ENCODE measurements at regions of chr10 and their contacts with region 1.

Region 1: DNA sequence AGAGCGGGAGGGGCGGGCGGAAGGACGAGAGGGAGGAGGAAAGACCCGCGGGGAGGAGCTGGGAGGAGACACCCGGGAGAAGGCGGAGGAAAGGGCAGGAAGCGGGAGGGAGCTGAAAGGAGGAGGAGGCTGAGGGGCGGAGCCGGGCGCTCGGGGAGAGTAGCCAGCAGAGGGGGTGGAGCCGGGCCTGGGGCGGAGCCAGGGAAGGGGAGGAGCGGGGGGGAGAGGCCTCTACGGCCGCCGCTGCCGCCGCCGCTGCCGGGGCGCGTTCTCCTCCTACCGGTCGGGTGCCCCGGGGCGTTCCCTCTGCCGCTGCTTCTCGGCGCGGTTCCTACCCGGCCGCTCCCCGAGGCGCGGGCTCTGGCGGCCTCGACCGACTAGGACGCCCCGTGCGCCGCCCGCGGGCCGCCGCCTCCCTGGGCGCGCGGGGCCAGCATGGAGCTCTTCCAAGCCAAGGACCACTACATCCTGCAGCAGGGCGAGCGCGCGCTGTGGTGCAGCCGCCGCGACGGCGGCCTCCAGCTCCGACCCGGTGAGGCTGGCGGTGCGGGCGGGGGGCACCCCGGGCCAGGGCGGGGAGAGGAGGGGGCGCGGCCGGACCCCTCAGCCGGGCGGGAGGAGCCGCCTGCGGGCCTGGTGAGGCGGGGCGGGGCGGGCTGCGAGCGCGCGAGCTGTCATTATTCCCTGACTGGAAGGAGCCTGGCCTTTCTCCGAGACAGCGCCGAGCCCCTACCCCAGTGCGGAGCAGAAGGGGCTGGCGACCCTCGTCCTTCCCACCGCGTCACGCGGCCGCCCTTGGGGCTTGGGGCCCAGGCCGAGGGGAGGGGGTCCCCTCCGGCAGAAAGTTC is at the start of gene INPP5F:
- DNase-seq: peak; percentile 95 to 100 (median 96)
- ATAC-seq: peak; percentile 98
- H3K4me3 ChIP-seq: peak within 1 kb of the TSS; percentile 78
- H3K4me3 Mint-ChIP-seq: peak within 1 kb of the TSS; percentile 89 to 95 (median 94)
- H3K27ac ChIP-seq: peak within 1 kb of the TSS; percentile 76
- H3K27ac Mint-ChIP-seq: peak within 1 kb of the TSS; percentile 71 to 92 (median 87)
- H3K4me1 ChIP-seq: peaks cover 11 to 24% of the 10 kb centered on the region in 2 donors
- H3K4me1 Mint-ChIP-seq: peaks cover 25 to 53% (median 38%) of the 10 kb centered on the region in 7 donors
- H3K27me3 ChIP-seq: no peaks in the 10 kb centered on the region
- H3K27me3 Mint-ChIP-seq: no peaks in the 10 kb centered on the region
- total RNA-seq, gene INPP5F: 8.5 to 12.1 (median 10.0) TPM

Region 2: GRCh38 chr10:119028900-119029612 is 697.0 kb before region 1 on chr10:
- CTCF ChIA-PET with region 1: no interaction called
- POLR2A ChIA-PET with region 1: no interaction called
- intact Hi-C with region 1: loop called in 1 of 2 experiments (anchors 2 kb)
- DNase-seq: peak; percentile 50 to 81 (median 60)
- ATAC-seq: peak; percentile 85
- H3K4me3 ChIP-seq: peak overlapping the region; percentile 43
- H3K4me3 Mint-ChIP-seq: peak overlapping the region; percentile 59 to 87 (median 78)
- H3K27ac ChIP-seq: no peak overlapping the region
- H3K27ac Mint-ChIP-seq: peak overlapping the region in 3 of 9 donors; percentile 17 to 65 (median 55)
- H3K4me1 ChIP-seq: no peaks in the 10 kb centered on the region
- H3K4me1 Mint-ChIP-seq: peaks cover 6 to 24% (median 10%) of the 10 kb centered on the region in 7 donors
- H3K27me3 ChIP-seq: no peaks in the 10 kb centered on the region
- H3K27me3 Mint-ChIP-seq: peaks cover 0 to 12% (median 0%) of the 10 kb centered on the region in 5 donors

Region 3: GRCh38 chr10:119178372-119179119 is 547.5 kb before region 1 on chr10 and contains the start of gene PRDX3:
- CTCF ChIA-PET with region 1: no interaction called
- POLR2A ChIA-PET with region 1: no interaction called
- intact Hi-C with region 1: loop called (anchors 1 to 5 kb)
- DNase-seq: peak; percentile 81 to 96 (median 89)
- ATAC-seq: peak; percentile 100
- H3K4me3 ChIP-seq: peak within 1 kb of the TSS; percentile 97
- H3K4me3 Mint-ChIP-seq: peak within 1 kb of the TSS; percentile 91 to 99 (median 96)
- H3K27ac ChIP-seq: peak within 1 kb of the TSS; percentile 79
- H3K27ac Mint-ChIP-seq: peak within 1 kb of the TSS; percentile 86 to 98 (median 93)
- H3K4me1 ChIP-seq: peaks cover 7 to 13% of the 10 kb centered on the region in 2 donors
- H3K4me1 Mint-ChIP-seq: peaks cover 13 to 48% (median 36%) of the 10 kb centered on the region in 7 donors
- H3K27me3 ChIP-seq: no peaks in the 10 kb centered on the region
- H3K27me3 Mint-ChIP-seq: no peaks in the 10 kb centered on the region
- total RNA-seq, gene PRDX3: 11.7 to 120 (median 35.4) TPM

Region 4: DNA sequence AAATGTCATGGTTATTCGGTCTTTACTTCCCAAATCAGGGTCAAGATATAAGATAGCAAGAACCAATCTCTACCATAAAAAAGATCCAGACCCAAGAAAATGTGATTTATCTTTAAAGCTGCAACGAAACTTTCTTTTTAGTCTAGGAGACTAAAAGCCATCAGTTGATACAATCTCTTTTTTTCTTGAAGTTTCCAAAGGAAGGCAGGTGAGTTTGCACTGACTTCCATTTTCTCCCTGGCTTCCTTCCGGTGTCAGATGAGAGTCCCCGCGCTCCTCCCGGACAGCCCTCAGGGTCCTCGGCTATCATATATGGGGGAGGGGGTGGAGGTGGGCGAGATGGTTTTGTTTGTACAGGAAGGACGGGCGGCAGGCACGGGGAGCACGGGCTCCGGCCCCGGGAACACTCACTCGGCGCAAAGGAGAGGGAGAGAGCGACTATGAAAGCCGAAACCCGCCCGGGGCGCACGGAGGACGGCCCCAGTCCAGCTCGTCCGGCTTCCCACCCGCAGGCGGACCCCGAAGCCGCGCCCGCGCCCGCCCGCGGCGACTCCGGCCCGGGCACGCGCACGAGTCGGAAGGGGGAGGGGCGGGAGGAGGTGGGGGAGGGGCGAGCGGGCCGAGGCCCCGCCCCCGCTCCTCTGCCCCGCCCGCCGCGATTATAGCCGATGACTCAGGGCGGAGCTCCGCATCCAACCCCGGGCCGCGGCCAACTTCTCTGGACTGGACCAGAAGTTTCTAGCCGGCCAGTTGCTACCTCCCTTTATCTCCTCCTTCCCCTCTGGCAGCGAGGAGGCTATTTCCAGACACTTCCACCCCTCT is 75.1 kb before region 1 on chr10 and contains the start of gene BAG3:
- CTCF ChIA-PET with region 1: no interaction called
- POLR2A ChIA-PET with region 1: interaction called, 10 read pairs
- intact Hi-C with region 1: loop called (anchors 1 kb)
- DNase-seq: peak; percentile 50 to 84 (median 67)
- ATAC-seq: peak; percentile 88
- H3K4me3 ChIP-seq: peak within 1 kb of the TSS; percentile 83
- H3K4me3 Mint-ChIP-seq: peak within 1 kb of the TSS; percentile 93 to 100 (median 97)
- H3K27ac ChIP-seq: peak within 1 kb of the TSS; percentile 93
- H3K27ac Mint-ChIP-seq: peak within 1 kb of the TSS; percentile 91 to 99 (median 97)
- H3K4me1 ChIP-seq: peaks cover 20 to 29% of the 10 kb centered on the region in 2 donors
- H3K4me1 Mint-ChIP-seq: peaks cover 29 to 48% (median 44%) of the 10 kb centered on the region in 7 donors
- H3K27me3 ChIP-seq: no peaks in the 10 kb centered on the region
- H3K27me3 Mint-ChIP-seq: peaks cover 0 to 2% (median 0%) of the 10 kb centered on the region in 5 donors
- total RNA-seq, gene BAG3: 21.9 to 44.5 (median 23.1) TPM

Region 5: DNA sequence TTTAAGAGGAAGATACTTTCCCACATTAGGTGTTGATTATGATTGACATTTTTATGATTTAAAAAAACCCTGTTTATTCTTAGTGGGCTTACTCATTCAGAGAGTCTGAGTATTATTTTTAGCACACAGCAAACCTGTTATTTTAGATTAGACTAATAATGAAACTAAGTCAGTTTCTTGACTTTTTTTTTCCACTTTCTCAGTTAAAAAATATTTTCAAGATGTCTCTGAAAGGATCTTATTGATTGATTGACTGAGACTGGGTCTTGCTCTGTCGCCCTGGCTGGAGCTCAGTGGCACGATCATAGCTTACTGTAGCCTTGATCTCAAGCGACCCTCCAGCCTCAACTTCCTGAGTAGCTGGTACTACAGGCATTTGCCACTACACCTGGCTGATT is 20.6 kb before region 1 on chr10:
- CTCF ChIA-PET with region 1: no interaction called
- POLR2A ChIA-PET with region 1: no interaction called
- intact Hi-C with region 1: loop called in 1 of 2 experiments (anchors 1 kb)
- DNase-seq: no peak
- ATAC-seq: no peak
- H3K4me3 ChIP-seq: no peak overlapping the region
- H3K4me3 Mint-ChIP-seq: peak overlapping the region in 5 of 10 donors; percentile 15 to 46 (median 26)
- H3K27ac ChIP-seq: no peak overlapping the region
- H3K27ac Mint-ChIP-seq: peak overlapping the region in 3 of 9 donors; percentile 56 to 86 (median 60)
- H3K4me1 ChIP-seq: no peaks in the 10 kb centered on the region
- H3K4me1 Mint-ChIP-seq: peaks cover 5 to 34% (median 10%) of the 10 kb centered on the region in 7 donors
- H3K27me3 ChIP-seq: no peaks in the 10 kb centered on the region
- H3K27me3 Mint-ChIP-seq: peaks cover 0 to 5% (median 0%) of the 10 kb centered on the region in 5 donors

Region 6: GRCh38 chr10:119761106-119761505 is 35.1 kb after region 1 on chr10:
- CTCF ChIA-PET with region 1: no interaction called
- POLR2A ChIA-PET with region 1: no interaction called
- intact Hi-C with region 1: no loop called
- DNase-seq: no peak
- ATAC-seq: no peak
- H3K4me3 ChIP-seq: no peak overlapping the region
- H3K4me3 Mint-ChIP-seq: no peak overlapping the region
- H3K27ac ChIP-seq: no peak overlapping the region
- H3K27ac Mint-ChIP-seq: no peak overlapping the region
- H3K4me1 ChIP-seq: no peaks in the 10 kb centered on the region
- H3K4me1 Mint-ChIP-seq: peaks cover 0 to 5% (median 0%) of the 10 kb centered on the region in 7 donors
- H3K27me3 ChIP-seq: no peaks in the 10 kb centered on the region
- H3K27me3 Mint-ChIP-seq: no peaks in the 10 kb centered on the region

Region 7: GRCh38 chr10:119892188-119893065 is 166.4 kb after region 1 on chr10 and contains the start of gene SEC23IP:
- CTCF ChIA-PET with region 1: no interaction called
- POLR2A ChIA-PET with region 1: no interaction called
- intact Hi-C with region 1: loop called (anchors 1 kb)
- DNase-seq: peak; percentile 77 to 94 (median 83)
- ATAC-seq: peak; percentile 99
- H3K4me3 ChIP-seq: peak within 1 kb of the TSS; percentile 95
- H3K4me3 Mint-ChIP-seq: peak within 1 kb of the TSS; percentile 92 to 100 (median 98)
- H3K27ac ChIP-seq: peak within 1 kb of the TSS; percentile 89
- H3K27ac Mint-ChIP-seq: peak within 1 kb of the TSS; percentile 95 to 99 (median 98)
- H3K4me1 ChIP-seq: peaks cover 12 to 21% of the 10 kb centered on the region in 2 donors
- H3K4me1 Mint-ChIP-seq: peaks cover 40 to 53% (median 48%) of the 10 kb centered on the region in 7 donors
- H3K27me3 ChIP-seq: no peaks in the 10 kb centered on the region
- H3K27me3 Mint-ChIP-seq: peaks cover 0 to 4% (median 0%) of the 10 kb centered on the region in 5 donors
- total RNA-seq, gene SEC23IP: 34.8 to 68.3 (median 54.4) TPM